ENCODE measurements at regions of chr19 and their contacts with region 1.

Region 1: GRCh38 chr19:28242297-28242927 is 970.5 kb downstream of the UQCRFS1 start:
- DNase-seq: no peak
- H3K4me3 ChIP-seq: no peak overlapping the region
- H3K27ac ChIP-seq: no peak overlapping the region
- H3K27me3 ChIP-seq: no peaks in the 10 kb centered on the region
- CTCF ChIP-seq: peak in 54 of 56 donors; percentile 45 to 79 (median 67)

Region 2: DNA sequence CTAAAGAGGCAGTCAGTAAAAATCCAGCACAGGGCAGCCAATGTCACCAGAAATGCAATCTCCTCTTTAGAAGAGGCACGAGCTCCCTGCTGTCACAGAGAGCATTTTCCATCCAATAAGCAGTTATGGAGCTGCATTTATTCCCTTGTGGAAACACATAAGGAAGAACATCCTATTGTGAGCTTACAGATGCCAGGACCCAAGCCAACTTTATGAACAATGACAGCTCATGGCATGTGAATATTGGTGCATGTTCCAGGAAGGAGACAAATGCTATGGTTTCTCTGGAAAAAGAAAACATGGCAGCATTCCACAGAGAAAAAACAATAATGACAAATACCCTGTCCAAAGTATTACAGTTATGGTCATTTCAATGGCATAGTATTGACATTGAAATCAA is 15.0 kb after region 1 on chr19:
- intact Hi-C with region 1: no loop called
- DNase-seq: no peak
- H3K4me3 ChIP-seq: no peak overlapping the region
- H3K27ac ChIP-seq: no peak overlapping the region
- H3K27me3 ChIP-seq: peaks cover 0 to 10% (median 0%) of the 10 kb centered on the region in 45 donors
- CTCF ChIP-seq: no peak

Region 3: GRCh38 chr19:28324275-28325060 is 82.1 kb after region 1 on chr19:
- intact Hi-C with region 1: loop called (anchors 2 to 10 kb)
- DNase-seq: no peak
- H3K4me3 ChIP-seq: no peak overlapping the region
- H3K27ac ChIP-seq: no peak overlapping the region
- H3K27me3 ChIP-seq: peaks cover 0 to 3% (median 0%) of the 10 kb centered on the region in 45 donors
- CTCF ChIP-seq: peak in 2 of 56 donors; percentile 5 to 8